GM12878 (cell line): ENCODE measurements at regions of chr20 and their contacts with region 1.

Region 1: GRCh38 chr20:19995220-19995863 is 21.8 kb upstream of the NAA20 start:
- DNase-seq: no peak
- ATAC-seq: peak; percentile 84
- H3K4me3 ChIP-seq: no peak overlapping the region
- H3K27ac ChIP-seq: no peak overlapping the region
- H3K4me1 ChIP-seq: no peaks in the 10 kb centered on the region
- H3K27me3 ChIP-seq: no peaks in the 10 kb centered on the region; a peak in 1 of 4 replicates
- CTCF ChIP-seq: peak; percentile 68 to 80 (median 73)
- EP300 ChIP-seq: no peak
- POLR2A ChIP-seq: no peak
- RAD21 ChIP-seq: peak; percentile 91

Region 2: GRCh38 chr20:19775360-19776253 is 219.7 kb before region 1 on chr20:
- CTCF ChIA-PET with region 1: interaction called, 3 read pairs
- POLR2A ChIA-PET with region 1: no interaction called
- RAD21 ChIA-PET with region 1: interaction called, 9 read pairs
- SMC1A ChIA-PET with region 1: interaction called, 22 read pairs
- in situ Hi-C with region 1: loop called (anchors 5 kb)
- intact Hi-C with region 1: no loop called
- DNase-seq: no peak
- ATAC-seq: no peak
- H3K4me3 ChIP-seq: no peak overlapping the region
- H3K27ac ChIP-seq: no peak overlapping the region
- H3K4me1 ChIP-seq: peaks cover 7% of the 10 kb centered on the region; the same call in 1 of the 2 replicates
- H3K27me3 ChIP-seq: peaks cover 0 to 1% of the 10 kb centered on the region in 2 experiments; a peak in 3 of 4 replicates
- CTCF ChIP-seq: no peak
- EP300 ChIP-seq: no peak
- POLR2A ChIP-seq: no peak
- RAD21 ChIP-seq: no peak

Region 3: GRCh38 chr20:19828232-19828631 is 167.1 kb before region 1 on chr20:
- CTCF ChIA-PET with region 1: interaction called, 7 read pairs
- POLR2A ChIA-PET with region 1: no interaction called
- RAD21 ChIA-PET with region 1: interaction called, 4 read pairs
- SMC1A ChIA-PET with region 1: interaction called, 13 read pairs
- in situ Hi-C with region 1: no loop called
- intact Hi-C with region 1: no loop called
- DNase-seq: peak; percentile 68
- ATAC-seq: peak; percentile 98
- H3K4me3 ChIP-seq: no peak overlapping the region
- H3K27ac ChIP-seq: no peak overlapping the region
- H3K4me1 ChIP-seq: peaks cover 10% of the 10 kb centered on the region
- H3K27me3 ChIP-seq: no peaks in the 10 kb centered on the region; a peak in 1 of 4 replicates
- CTCF ChIP-seq: peak; percentile 15 to 51 (median 42); a peak in 4 of 6 replicates
- EP300 ChIP-seq: peak; percentile 33 to 53; a peak in 2 of 4 replicates
- POLR2A ChIP-seq: no peak
- RAD21 ChIP-seq: peak; percentile 39

Region 4: GRCh38 chr20:19909725-19910124 is 85.6 kb before region 1 on chr20:
- CTCF ChIA-PET with region 1: interaction called, 77 read pairs
- POLR2A ChIA-PET with region 1: no interaction called
- RAD21 ChIA-PET with region 1: interaction called, 42 read pairs
- SMC1A ChIA-PET with region 1: interaction called, 67 read pairs
- in situ Hi-C with region 1: loop called (anchors 5 kb)
- intact Hi-C with region 1: no loop called
- DNase-seq: no peak
- ATAC-seq: no peak
- H3K4me3 ChIP-seq: no peak overlapping the region
- H3K27ac ChIP-seq: no peak overlapping the region
- H3K4me1 ChIP-seq: peaks cover 37% of the 10 kb centered on the region
- H3K27me3 ChIP-seq: no peaks in the 10 kb centered on the region
- CTCF ChIP-seq: no peak
- EP300 ChIP-seq: no peak
- POLR2A ChIP-seq: no peak
- RAD21 ChIP-seq: no peak

Region 5: DNA sequence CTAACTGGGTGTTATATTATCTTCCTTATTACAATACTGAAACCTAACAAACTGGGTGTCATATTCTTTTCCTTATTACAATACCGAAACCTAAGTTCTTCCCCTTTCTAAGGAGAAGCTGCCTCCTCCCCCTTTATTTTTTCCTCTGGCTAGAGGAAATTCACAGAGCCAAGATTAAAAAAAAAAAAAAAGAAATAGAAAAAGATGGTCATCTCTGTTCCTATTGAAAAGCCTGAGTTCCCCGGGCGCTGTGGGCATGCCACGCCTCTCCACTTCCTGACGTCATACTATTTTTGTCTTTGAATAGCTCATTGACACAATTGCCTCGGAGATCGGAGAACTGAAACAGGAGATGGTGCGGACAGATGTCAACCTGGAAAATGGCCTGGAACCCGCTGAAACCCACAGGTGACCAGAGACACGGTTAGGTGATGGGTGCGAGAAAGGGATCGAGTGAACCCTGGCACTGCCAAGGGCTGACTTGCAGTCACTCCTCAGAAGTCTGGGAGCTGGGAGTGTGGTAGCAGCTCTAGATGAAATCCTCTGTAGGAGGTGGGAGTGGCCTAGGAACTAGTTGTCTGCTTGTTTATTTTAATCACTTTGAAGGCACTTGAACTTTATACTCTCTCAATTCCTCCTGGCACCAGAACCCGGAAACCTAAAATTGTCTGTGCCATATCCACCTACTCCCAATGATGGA is 60.4 kb before region 1 on chr20:
- CTCF ChIA-PET with region 1: interaction called, 5 read pairs
- POLR2A ChIA-PET with region 1: no interaction called
- RAD21 ChIA-PET with region 1: interaction called, 6 read pairs
- SMC1A ChIA-PET with region 1: interaction called, 11 read pairs
- in situ Hi-C with region 1: no loop called
- intact Hi-C with region 1: no loop called
- DNase-seq: no peak
- ATAC-seq: peak; percentile 72
- H3K4me3 ChIP-seq: 0 out of 2 replicates have a peak overlapping the region, but pooled peaks have one; percentile 5
- H3K27ac ChIP-seq: no peak overlapping the region
- H3K4me1 ChIP-seq: peaks cover 23% of the 10 kb centered on the region
- H3K27me3 ChIP-seq: no peaks in the 10 kb centered on the region
- CTCF ChIP-seq: no peak
- EP300 ChIP-seq: peak in 1 of 2 experiments; percentile 55; a peak in 1 of 4 replicates
- POLR2A ChIP-seq: no peak
- RAD21 ChIP-seq: no peak

Region 6: DNA sequence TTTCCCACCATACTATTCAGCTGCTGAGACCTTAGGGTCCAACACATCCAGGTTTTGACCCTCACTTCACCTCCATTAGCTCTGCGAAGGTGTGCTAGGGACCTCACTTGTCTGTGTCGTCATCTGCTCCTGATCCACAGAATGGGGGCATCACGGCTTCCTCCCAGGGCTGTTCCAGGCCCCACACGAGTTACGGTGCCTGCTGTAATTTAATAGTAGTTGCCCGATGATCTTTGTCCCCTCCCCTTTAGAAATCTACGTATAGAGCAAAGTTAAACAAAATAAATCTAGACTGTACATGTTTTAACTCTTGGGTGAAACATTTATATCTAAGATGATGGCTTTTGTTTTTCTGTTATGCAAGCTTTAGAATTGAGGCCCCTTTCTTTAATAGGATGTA is 27.3 kb before region 1 on chr20:
- CTCF ChIA-PET with region 1: no interaction called
- POLR2A ChIA-PET with region 1: no interaction called
- RAD21 ChIA-PET with region 1: no interaction called
- SMC1A ChIA-PET with region 1: no interaction called
- in situ Hi-C with region 1: no loop called
- intact Hi-C with region 1: no loop called
- DNase-seq: no peak
- ATAC-seq: no peak
- H3K4me3 ChIP-seq: no peak overlapping the region
- H3K27ac ChIP-seq: no peak overlapping the region
- H3K4me1 ChIP-seq: no peaks in the 10 kb centered on the region
- H3K27me3 ChIP-seq: no peaks in the 10 kb centered on the region
- CTCF ChIP-seq: no peak
- EP300 ChIP-seq: no peak
- POLR2A ChIP-seq: no peak
- RAD21 ChIP-seq: no peak